K562 (cell line): ENCODE measurements at regions of chr2 and their contacts with region 1.

Region 1: DNA sequence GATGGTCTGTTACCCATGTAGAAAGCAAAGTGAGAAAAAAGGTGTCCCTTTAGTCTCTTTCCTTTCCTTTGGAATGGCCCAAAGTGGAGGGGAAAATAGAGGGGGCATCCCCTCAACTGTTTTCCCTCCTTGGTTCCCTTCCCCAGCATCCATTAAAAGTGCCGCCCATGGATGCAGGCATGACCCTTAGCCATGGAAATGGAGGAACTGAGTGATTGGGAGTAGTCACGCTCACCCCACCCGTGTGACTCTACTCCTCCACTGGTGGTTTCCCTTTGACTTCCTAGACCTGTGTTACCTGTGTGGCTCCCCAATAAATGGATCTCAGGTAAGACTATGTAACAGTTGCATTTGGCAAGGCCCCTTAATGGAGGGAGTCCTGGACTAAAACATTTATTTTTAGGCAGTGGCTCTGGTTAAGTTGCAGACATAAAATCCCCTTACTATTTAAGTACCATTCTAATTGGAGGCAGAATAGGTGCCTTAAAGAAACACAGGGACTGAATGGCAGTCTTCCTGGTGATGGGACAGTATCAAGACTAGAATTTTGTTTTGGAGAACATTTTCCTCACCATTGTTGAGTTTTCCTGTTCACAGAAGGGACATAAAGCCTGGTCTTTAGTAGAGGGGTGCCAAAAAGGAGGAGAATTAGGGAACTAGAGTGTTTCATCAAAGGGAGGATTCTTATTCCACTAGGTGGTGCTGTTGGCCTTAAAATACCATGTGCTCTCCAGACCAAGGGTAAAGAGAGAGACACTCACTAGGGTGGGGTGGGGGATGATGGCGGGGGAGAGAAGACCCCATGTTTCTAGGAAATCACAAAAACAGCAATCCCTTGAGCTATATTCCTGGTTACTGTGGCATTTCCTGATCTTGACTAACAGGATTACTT is 25.7 kb upstream of the PLA2R1 start:
- DNase-seq: peak; percentile 35 to 56 (median 46)
- ATAC-seq: peak; percentile 86
- H3K4me3 ChIP-seq: no peak overlapping the region
- H3K27ac ChIP-seq: no peak overlapping the region
- H3K4me1 ChIP-seq: no peaks in the 10 kb centered on the region
- H3K27me3 ChIP-seq: no peaks in the 10 kb centered on the region
- CTCF ChIP-seq: peak; percentile 42 to 48 (median 44); a peak in 4 of 6 replicates
- EP300 ChIP-seq: no peak
- POLR2A ChIP-seq: no peak
- RAD21 ChIP-seq: peak; percentile 23 to 57; a peak in 3 of 4 replicates

Region 2: GRCh38 chr2:160006475-160006874 is 81.6 kb before region 1 on chr2:
- CTCF ChIA-PET with region 1: no interaction called
- POLR2A ChIA-PET with region 1: no interaction called
- in situ Hi-C with region 1: no loop called
- intact Hi-C with region 1: no loop called
- DNase-seq: no peak
- ATAC-seq: no peak
- H3K4me3 ChIP-seq: no peak overlapping the region
- H3K27ac ChIP-seq: no peak overlapping the region
- H3K4me1 ChIP-seq: no peaks in the 10 kb centered on the region
- H3K27me3 ChIP-seq: peaks cover 2 to 3% of the 10 kb centered on the region in 2 experiments; a peak in 4 of 5 replicates
- CTCF ChIP-seq: no peak
- EP300 ChIP-seq: no peak
- POLR2A ChIP-seq: no peak
- RAD21 ChIP-seq: no peak

Region 3: GRCh38 chr2:160324161-160324800 is 236.2 kb after region 1 on chr2:
- CTCF ChIA-PET with region 1: no interaction called
- POLR2A ChIA-PET with region 1: no interaction called
- in situ Hi-C with region 1: no loop called
- intact Hi-C with region 1: no loop called
- DNase-seq: peak; percentile 21 to 37 (median 23)
- ATAC-seq: peak; percentile 80
- H3K4me3 ChIP-seq: no peak overlapping the region
- H3K27ac ChIP-seq: no peak overlapping the region
- H3K4me1 ChIP-seq: no peaks in the 10 kb centered on the region
- H3K27me3 ChIP-seq: no peaks in the 10 kb centered on the region
- CTCF ChIP-seq: peak; percentile 43 to 66 (median 57); a peak in 5 of 6 replicates
- EP300 ChIP-seq: no peak
- POLR2A ChIP-seq: no peak
- RAD21 ChIP-seq: peak in 1 of 2 experiments; percentile 46; a peak in 3 of 4 replicates

Region 4: DNA sequence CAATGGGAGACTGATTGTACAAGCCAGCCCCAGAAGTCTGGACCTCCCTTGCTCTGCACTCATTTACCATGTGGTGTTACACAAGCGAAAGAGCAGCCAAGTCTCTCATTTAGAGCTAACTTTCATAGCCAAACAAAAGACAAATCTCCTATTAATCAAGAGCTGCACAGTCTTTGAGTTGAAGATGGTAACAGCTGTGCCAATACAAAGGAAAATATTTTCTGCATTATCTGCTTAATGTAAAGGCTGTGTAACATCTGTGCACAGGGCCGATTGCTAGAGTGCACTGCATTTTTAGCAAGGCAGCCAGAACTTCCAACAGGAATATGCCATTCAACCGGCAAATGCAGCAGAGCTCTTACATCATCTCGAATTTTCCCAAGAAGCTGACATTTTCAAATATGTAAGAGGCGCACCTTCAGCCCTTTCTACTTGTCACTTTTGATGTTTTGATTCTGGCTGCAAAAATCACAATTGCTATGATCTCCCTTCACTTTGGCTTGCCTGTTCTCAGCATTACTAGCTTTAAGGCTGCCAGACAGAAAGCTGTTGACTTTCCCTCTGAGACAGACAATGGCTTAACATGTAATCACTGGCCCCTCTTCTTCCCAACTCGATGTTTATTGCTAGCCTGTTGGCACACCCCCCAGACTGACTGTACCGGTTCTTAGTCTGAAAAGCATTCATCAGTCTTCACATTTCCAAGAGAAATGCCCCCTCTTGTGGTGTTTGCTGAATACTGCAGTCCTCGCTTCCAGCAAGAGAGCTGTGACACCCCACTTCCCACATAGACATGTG is 975.3 kb after region 1 on chr2:
- CTCF ChIA-PET with region 1: no interaction called
- POLR2A ChIA-PET with region 1: no interaction called
- in situ Hi-C with region 1: no loop called
- intact Hi-C with region 1: loop called (anchors 5 kb)
- DNase-seq: peak; percentile 46 to 70 (median 62)
- ATAC-seq: peak; percentile 97
- H3K4me3 ChIP-seq: no peak overlapping the region
- H3K27ac ChIP-seq: no peak overlapping the region
- H3K4me1 ChIP-seq: no peaks in the 10 kb centered on the region
- H3K27me3 ChIP-seq: peaks cover 0 to 6% of the 10 kb centered on the region in 2 experiments; a peak in 1 of 5 replicates
- CTCF ChIP-seq: peak; percentile 75 to 83 (median 83)
- EP300 ChIP-seq: no peak
- POLR2A ChIP-seq: no peak
- RAD21 ChIP-seq: peak; percentile 50 to 75

Region 5: GRCh38 chr2:161946489-161947107 is 1858.5 kb after region 1 on chr2:
- CTCF ChIA-PET with region 1: no interaction called
- POLR2A ChIA-PET with region 1: no interaction called
- in situ Hi-C with region 1: no loop called
- intact Hi-C with region 1: loop called (anchors 10 kb)
- DNase-seq: peak in 1 of 4 experiments; percentile 3
- ATAC-seq: no peak
- H3K4me3 ChIP-seq: no peak overlapping the region
- H3K27ac ChIP-seq: no peak overlapping the region
- H3K4me1 ChIP-seq: no peaks in the 10 kb centered on the region
- H3K27me3 ChIP-seq: no peaks in the 10 kb centered on the region
- CTCF ChIP-seq: peak in 1 of 3 experiments; percentile 38; a peak in 2 of 6 replicates
- EP300 ChIP-seq: no peak
- POLR2A ChIP-seq: no peak
- RAD21 ChIP-seq: peak; percentile 34 to 54; a peak in 3 of 4 replicates